Activated naive CD8-positive, alpha-beta T cell treated with anti-CD3 and anti-CD28 coated beads, Interleukin-2, amount 10 ng/mL, durations not matched to agents 7 days and 5 days (primary cell): ENCODE measurements at regions of chr1 and their contacts with region 1.

Region 1: GRCh38 chr1:44775078-44775929 is at the start of gene RPS8:
- DNase-seq: peak; percentile 86
- ATAC-seq: peak; percentile 80
- H3K4me3 Mint-ChIP-seq: peak within 1 kb of the TSS; percentile 91
- H3K27ac Mint-ChIP-seq: peak within 1 kb of the TSS; percentile 96
- H3K4me1 Mint-ChIP-seq: peaks cover 24% of the 10 kb centered on the region
- H3K27me3 Mint-ChIP-seq: no peaks in the 10 kb centered on the region
- total RNA-seq, gene RPS8: 1,522 to 1,548 TPM

Region 2: GRCh38 chr1:44707959-44708831 is 67.1 kb before region 1 on chr1:
- POLR2A ChIA-PET with region 1: no interaction called
- DNase-seq: no peak
- ATAC-seq: peak; percentile 68
- H3K4me3 Mint-ChIP-seq: peak overlapping the region; percentile 64
- H3K27ac Mint-ChIP-seq: peak overlapping the region; percentile 68
- H3K4me1 Mint-ChIP-seq: peaks cover 12% of the 10 kb centered on the region
- H3K27me3 Mint-ChIP-seq: peaks cover 15% of the 10 kb centered on the region

Region 3: GRCh38 chr1:44739361-44740178 is 35.7 kb before region 1 on chr1 and contains the start of gene KIF2C:
- POLR2A ChIA-PET with region 1: interaction called, 43 read pairs
- DNase-seq: peak; percentile 97
- ATAC-seq: peak; percentile 99
- H3K4me3 Mint-ChIP-seq: peak within 1 kb of the TSS; percentile 98
- H3K27ac Mint-ChIP-seq: peak within 1 kb of the TSS; percentile 91
- H3K4me1 Mint-ChIP-seq: peaks cover 33% of the 10 kb centered on the region
- H3K27me3 Mint-ChIP-seq: no peaks in the 10 kb centered on the region
- total RNA-seq, gene KIF2C: 76.5 to 87.7 TPM

Region 4: DNA sequence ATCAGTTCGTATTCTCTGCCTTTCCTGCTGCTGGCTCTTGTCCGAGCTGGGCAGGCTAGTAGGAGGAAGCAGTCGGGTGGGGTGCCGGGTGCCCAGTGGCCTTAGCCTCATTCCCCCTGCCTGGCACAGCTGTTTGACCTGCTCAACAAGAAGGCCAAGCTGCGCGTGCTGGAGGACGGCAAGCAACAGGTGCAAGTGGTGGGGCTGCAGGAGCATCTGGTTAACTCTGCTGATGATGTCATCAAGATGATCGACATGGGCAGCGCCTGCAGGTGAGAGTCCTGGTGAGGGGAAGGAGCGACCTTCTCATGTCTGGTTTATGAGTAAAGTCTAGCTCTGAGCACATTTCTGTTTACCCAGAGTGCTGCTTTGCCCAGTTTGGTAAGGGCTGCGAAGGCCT is 16.2 kb before region 1 on chr1:
- POLR2A ChIA-PET with region 1: interaction called, 22 read pairs
- DNase-seq: no peak
- ATAC-seq: no peak
- H3K4me3 Mint-ChIP-seq: no peak overlapping the region
- H3K27ac Mint-ChIP-seq: no peak overlapping the region
- H3K4me1 Mint-ChIP-seq: peaks cover 10% of the 10 kb centered on the region
- H3K27me3 Mint-ChIP-seq: no peaks in the 10 kb centered on the region

Region 5: GRCh38 chr1:44792783-44793714 is 17.7 kb after region 1 on chr1:
- POLR2A ChIA-PET with region 1: interaction called, 64 read pairs
- DNase-seq: peak; percentile 24
- ATAC-seq: no peak
- H3K4me3 Mint-ChIP-seq: no peak overlapping the region
- H3K27ac Mint-ChIP-seq: no peak overlapping the region
- H3K4me1 Mint-ChIP-seq: no peaks in the 10 kb centered on the region
- H3K27me3 Mint-ChIP-seq: no peaks in the 10 kb centered on the region

Region 6: DNA sequence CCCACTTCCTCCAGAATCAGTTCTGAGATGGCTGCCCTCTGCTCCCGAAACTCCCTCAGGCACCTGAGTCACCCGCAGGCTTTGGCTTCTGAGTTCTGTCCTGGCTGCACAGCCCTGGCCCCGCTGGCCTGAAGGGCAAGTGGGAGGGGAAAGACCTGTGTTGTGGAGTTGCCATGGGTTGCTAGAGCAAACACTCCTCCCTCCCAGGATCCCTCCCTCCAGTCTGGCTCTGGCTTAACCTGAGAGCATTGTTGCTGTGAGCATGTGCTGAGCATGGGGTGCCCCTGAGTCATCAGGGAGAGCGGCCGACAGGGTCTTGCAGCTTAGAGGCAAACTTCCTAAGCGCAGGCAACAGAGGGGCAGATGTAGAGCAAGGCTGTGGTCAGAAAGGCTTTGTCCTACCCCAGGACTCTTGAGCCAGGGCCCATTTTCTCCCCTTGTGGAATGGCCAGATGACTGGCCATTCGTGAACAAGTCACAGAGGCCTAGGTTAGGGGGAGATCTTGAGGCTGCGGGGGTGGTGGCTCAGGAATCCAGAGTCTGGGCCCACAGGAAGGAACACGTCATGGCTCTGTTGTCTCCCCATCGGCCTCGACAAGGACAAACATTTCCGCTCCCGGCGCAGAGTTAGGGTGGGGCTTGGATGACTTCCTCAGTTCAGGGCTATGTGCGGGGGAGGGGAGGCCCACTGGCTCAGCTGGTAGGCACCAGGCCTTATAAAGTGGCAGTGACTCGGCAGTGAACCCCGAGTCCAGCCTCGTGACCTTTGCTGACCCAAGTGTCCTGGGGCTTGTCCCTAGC is 32.2 kb after region 1 on chr1 and contains the start of gene DYNLT4:
- POLR2A ChIA-PET with region 1: interaction called, 35 read pairs
- DNase-seq: peak; percentile 84
- ATAC-seq: peak; percentile 61
- H3K4me3 Mint-ChIP-seq: peak within 1 kb of the TSS; percentile 78
- H3K27ac Mint-ChIP-seq: peak within 1 kb of the TSS; percentile 99
- H3K4me1 Mint-ChIP-seq: peaks cover 55% of the 10 kb centered on the region
- H3K27me3 Mint-ChIP-seq: no peaks in the 10 kb centered on the region
- total RNA-seq, gene DYNLT4: 0.43 to 0.97 TPM

Region 7: DNA sequence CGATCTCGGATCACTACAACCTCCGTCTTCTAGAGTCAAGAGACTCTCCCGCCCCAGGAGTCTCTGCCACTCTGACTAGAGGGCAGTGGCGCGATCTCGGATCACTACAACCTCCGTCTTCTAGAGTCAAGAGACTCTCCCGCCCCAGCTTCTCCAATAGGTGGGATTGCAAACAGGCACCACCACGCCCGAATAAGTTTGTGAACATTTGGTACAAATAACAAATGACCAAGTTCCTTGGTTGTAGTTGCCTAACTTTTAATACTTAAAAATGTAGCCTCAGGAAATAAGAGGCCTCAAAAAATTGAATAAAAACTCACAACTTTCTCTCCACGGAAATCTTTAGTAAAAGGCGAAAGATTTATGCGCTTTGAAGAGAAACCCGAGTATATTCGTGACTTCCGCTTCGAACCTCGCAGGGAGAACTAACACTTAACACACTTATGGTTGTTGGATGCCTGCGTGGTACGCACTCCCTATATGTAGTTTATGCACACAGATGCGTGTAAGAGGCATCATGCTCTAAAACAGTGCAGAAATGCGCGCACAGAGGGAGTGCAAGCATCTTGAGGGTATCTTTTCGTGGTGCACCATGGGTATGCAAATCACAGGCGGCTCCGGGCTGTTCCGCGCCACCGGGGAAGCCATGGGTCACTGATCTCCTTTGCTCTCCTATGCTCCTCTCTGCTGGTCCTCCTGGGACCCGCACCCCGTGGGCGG is 44.5 kb after region 1 on chr1:
- POLR2A ChIA-PET with region 1: interaction called, 28 read pairs
- DNase-seq: peak; percentile 84
- ATAC-seq: peak; percentile 88
- H3K4me3 Mint-ChIP-seq: peak overlapping the region; percentile 92
- H3K27ac Mint-ChIP-seq: peak overlapping the region; percentile 99
- H3K4me1 Mint-ChIP-seq: peaks cover 36% of the 10 kb centered on the region
- H3K27me3 Mint-ChIP-seq: no peaks in the 10 kb centered on the region

Region 8: GRCh38 chr1:45686317-45687013 is 911.2 kb after region 1 on chr1 and contains the start of gene GPBP1L1:
- POLR2A ChIA-PET with region 1: interaction called, 11 read pairs
- DNase-seq: peak; percentile 97
- ATAC-seq: peak; percentile 70
- H3K4me3 Mint-ChIP-seq: peak within 1 kb of the TSS; percentile 92
- H3K27ac Mint-ChIP-seq: peak within 1 kb of the TSS; percentile 99
- H3K4me1 Mint-ChIP-seq: peaks cover 20% of the 10 kb centered on the region
- H3K27me3 Mint-ChIP-seq: no peaks in the 10 kb centered on the region
- total RNA-seq, gene GPBP1L1: 134 to 138 TPM